ENCODE measurements at regions of chr13 and their contacts with region 1.

Region 1: GRCh38 chr13:109145631-109146030 is 516.2 kb downstream of the MYO16 start:
- DNase-seq: no peak
- H3K4me3 ChIP-seq: no peak overlapping the region
- H3K27ac ChIP-seq: no peak overlapping the region
- H3K4me1 ChIP-seq: peaks cover 6 to 25% (median 6%) of the 10 kb centered on the region in 3 donors
- H3K27me3 ChIP-seq: peaks cover 0 to 21% (median 0%) of the 10 kb centered on the region in 4 donors
- CTCF ChIP-seq: peak in 5 of 6 experiments; percentile 68 to 88 (median 78)
- POLR2A ChIP-seq: no peak

Region 2: DNA sequence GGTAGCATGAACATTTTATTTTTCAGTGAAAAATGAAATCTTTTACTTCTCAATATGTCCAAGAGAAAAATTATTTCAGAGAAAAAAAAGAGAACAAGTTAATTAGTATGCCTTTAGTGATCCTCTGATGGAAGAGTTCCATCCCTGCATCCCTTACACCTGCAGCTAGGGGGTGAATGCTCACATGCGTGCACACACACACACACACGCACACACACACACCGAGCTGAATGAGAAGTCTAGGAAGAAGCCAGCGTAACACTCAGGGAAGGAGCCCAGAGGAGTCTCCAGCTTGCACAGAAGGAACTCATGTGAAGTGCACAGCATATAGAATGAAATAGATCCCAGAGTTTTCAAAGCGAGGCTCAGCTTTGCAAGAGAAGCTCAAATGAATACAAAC is 130.2 kb after region 1 on chr13:
- intact Hi-C with region 1: loop called (anchors 10 kb)
- DNase-seq: no peak
- H3K4me3 ChIP-seq: no peak overlapping the region
- H3K27ac ChIP-seq: no peak overlapping the region
- H3K4me1 ChIP-seq: peaks cover 0 to 30% (median 0%) of the 10 kb centered on the region in 3 donors
- H3K27me3 ChIP-seq: no peaks in the 10 kb centered on the region
- CTCF ChIP-seq: peak in 2 of 6 experiments; percentile 19 to 46
- POLR2A ChIP-seq: no peak

Region 3: DNA sequence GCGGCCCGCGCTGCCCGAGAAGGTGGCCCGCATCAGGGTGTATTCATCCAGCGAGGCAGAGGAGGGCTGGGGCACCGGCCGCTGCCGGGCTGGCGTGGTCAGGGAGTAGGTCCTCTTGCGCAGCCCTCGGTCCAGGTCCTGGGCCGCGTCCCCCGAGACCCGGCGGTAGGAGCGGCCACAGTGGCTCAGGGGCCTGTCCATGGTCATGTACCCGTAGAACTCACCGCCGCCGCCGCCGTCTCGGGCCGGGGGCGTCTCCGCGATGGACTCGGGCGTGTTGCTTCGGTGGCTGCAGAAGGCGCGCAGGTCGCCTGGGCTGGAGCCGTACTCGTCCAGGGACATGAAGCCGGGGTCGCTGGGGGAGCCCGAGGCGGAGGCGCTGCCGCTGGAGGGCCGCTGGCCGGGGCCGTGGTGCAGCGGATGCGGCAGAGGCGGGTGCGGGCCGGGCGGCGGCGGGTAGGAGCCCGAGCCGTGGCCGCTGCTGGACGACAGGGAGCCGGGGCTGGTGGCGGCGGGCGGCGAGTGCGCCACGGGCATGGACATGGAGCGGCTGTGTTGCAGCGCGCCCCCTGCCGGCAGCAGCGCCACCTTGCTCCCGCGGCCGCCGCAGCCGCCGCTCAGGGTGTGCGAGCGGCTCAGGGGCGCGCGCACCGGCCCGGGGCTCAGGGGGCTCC is 638.7 kb after region 1 on chr13:
- intact Hi-C with region 1: loop called (anchors 5 kb)
- DNase-seq: no peak
- H3K4me3 ChIP-seq: peak overlapping the region; percentile 36 to 84 (median 64)
- H3K27ac ChIP-seq: peak overlapping the region; percentile 40 to 99 (median 90)
- H3K4me1 ChIP-seq: peaks cover 7 to 80% (median 31%) of the 10 kb centered on the region in 3 donors
- H3K27me3 ChIP-seq: peaks cover 0 to 15% (median 0%) of the 10 kb centered on the region in 4 donors
- CTCF ChIP-seq: peak in 5 of 6 experiments; percentile 29 to 87 (median 78)
- POLR2A ChIP-seq: no peak

Region 4: GRCh38 chr13:110108347-110109174 is 962.9 kb after region 1 on chr13:
- intact Hi-C with region 1: loop called (anchors 10 kb)
- DNase-seq: no peak
- H3K4me3 ChIP-seq: no peak overlapping the region
- H3K27ac ChIP-seq: peak overlapping the region; percentile 4 to 60 (median 26)
- H3K4me1 ChIP-seq: peaks cover 0 to 19% (median 11%) of the 10 kb centered on the region in 3 donors
- H3K27me3 ChIP-seq: no peaks in the 10 kb centered on the region
- CTCF ChIP-seq: peak; percentile 25 to 82 (median 58)
- POLR2A ChIP-seq: no peak